Sigmoid colon (tissue), 7 donors: ENCODE measurements at regions of chr11 and their contacts with region 1.

Region 1: GRCh38 chr11:83071567-83072349 is at the start of gene RAB30:
- DNase-seq: peak; percentile 99
- H3K4me3 ChIP-seq: peak within 1 kb of the TSS; percentile 62 to 75 (median 69)
- H3K27ac ChIP-seq: peak within 1 kb of the TSS; percentile 91 to 95 (median 92)
- H3K4me1 ChIP-seq: peaks cover 0 to 46% (median 40%) of the 10 kb centered on the region in 4 donors
- H3K27me3 ChIP-seq: no peaks in the 10 kb centered on the region
- CTCF ChIP-seq: no peak
- EP300 ChIP-seq: no peak
- POLR2A ChIP-seq: peak; percentile 76 to 84
- total RNA-seq, gene RAB30: 22.2 to 29.9 (median 26.3) TPM

Region 2: DNA sequence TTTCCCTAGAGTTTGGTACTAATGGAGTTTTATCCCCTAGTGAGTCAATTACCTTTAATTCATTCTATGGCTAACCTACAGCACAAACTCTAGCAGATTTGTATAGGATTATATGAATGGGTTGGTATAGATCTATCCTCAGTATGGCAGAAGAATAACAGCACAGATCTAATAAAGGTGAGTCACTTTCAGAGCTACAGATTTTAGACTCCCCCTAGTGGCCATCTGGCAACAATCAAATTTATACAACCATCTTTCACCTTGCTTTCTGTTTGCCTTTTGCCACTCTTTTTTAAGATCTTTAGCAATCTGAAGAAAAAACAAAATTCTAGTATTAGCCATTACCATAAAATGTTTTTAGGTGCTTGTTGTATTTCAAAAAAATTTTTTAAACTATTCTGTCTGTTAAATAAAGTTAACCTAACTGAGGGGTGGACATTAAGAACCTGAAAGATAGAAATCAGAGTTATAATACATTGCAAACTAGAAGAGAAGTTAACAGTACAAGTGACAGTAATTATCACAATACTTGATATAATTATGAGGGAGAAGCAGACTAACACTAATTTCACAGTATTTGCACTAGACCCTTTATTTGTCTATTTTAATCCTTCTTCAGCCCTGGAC is 144.4 kb before region 1 on chr11:
- intact Hi-C with region 1: loop called (anchors 5 kb)
- DNase-seq: no peak
- H3K4me3 ChIP-seq: no peak overlapping the region
- H3K27ac ChIP-seq: no peak overlapping the region
- H3K4me1 ChIP-seq: no peaks in the 10 kb centered on the region
- H3K27me3 ChIP-seq: no peaks in the 10 kb centered on the region
- CTCF ChIP-seq: peak; percentile 39 to 74 (median 61)
- EP300 ChIP-seq: no peak
- POLR2A ChIP-seq: no peak

Region 3: GRCh38 chr11:83033972-83034672 is 37.6 kb before region 1 on chr11:
- intact Hi-C with region 1: loop called (anchors 1 kb)
- DNase-seq: peak; percentile 71
- H3K4me3 ChIP-seq: peak overlapping the region; percentile 31 to 42 (median 40)
- H3K27ac ChIP-seq: peak overlapping the region; percentile 83 to 86 (median 85)
- H3K4me1 ChIP-seq: peaks cover 0 to 63% (median 50%) of the 10 kb centered on the region in 4 donors
- H3K27me3 ChIP-seq: no peaks in the 10 kb centered on the region
- CTCF ChIP-seq: no peak
- EP300 ChIP-seq: no peak
- POLR2A ChIP-seq: no peak

Region 4: DNA sequence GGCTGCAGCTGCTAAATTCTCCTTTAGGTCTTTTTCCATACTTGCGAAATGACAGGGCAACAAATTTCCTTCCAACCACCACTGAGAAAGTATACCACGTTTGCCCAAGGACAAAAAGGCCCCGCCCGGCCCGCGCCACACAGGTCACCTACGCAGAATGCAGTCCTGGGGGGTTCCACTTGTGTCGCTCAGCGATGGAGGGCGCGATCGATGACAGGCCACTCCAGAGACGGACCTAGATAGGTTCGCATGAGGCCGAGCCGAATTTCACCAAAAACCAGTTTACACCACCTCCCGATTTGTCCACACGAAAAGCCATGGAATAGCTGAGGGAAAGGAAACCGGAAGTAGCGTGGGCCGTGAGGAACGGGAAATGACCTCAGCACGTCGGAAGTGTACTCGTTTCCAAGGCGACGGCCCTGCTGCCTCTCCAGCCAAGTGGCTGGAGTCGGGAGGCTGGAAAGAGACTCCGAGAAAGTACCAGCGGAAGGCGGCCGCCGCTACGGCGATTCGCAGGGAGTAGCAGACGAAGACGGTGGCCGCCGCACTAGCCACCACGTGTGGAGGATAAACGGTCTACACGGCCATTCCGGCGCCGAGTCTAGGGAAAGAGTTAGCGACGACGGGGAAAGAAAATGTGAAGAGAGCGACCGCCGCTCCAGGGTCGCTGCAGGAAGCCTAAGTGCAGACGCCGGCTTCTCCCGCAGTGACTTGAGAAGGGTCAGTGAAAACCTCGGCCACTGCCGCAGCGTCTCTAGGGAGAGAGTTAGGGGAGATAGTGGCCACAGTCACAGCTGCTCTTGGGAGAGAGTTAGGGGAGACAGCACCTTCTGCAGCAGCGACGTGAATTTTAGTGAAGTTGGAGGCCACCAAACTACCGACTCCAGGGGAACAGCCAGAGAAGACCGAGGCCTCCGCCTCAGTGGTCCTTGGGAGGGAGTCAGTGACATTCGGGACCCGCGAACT is 121.8 kb after region 1 on chr11 and contains the start of gene ANKRD42:
- intact Hi-C with region 1: loop called (anchors 5 kb)
- DNase-seq: peak; percentile 97
- H3K4me3 ChIP-seq: peak within 1 kb of the TSS; percentile 73 to 81 (median 74)
- H3K27ac ChIP-seq: peak within 1 kb of the TSS; percentile 87 to 94 (median 90)
- H3K4me1 ChIP-seq: peaks cover 0 to 43% (median 37%) of the 10 kb centered on the region in 4 donors
- H3K27me3 ChIP-seq: no peaks in the 10 kb centered on the region
- CTCF ChIP-seq: peak in 1 of 4 experiments; percentile 25
- EP300 ChIP-seq: peak in 2 of 4 donors; percentile 1 to 23
- POLR2A ChIP-seq: peak; percentile 62 to 85
- total RNA-seq, gene ANKRD42: 9.6 to 12.2 (median 11.0) TPM